ENCODE measurements at regions of chr7 and their contacts with region 1.

Region 1: GRCh38 chr7:95589031-95589430 is 7.3 kb downstream of the PDK4 start:
- H3K4me3 Mint-ChIP-seq: no peak overlapping the region
- H3K27ac Mint-ChIP-seq: no peak overlapping the region
- H3K4me1 Mint-ChIP-seq: peaks cover 9% of the 10 kb centered on the region
- H3K27me3 Mint-ChIP-seq: no peaks in the 10 kb centered on the region

Region 2: DNA sequence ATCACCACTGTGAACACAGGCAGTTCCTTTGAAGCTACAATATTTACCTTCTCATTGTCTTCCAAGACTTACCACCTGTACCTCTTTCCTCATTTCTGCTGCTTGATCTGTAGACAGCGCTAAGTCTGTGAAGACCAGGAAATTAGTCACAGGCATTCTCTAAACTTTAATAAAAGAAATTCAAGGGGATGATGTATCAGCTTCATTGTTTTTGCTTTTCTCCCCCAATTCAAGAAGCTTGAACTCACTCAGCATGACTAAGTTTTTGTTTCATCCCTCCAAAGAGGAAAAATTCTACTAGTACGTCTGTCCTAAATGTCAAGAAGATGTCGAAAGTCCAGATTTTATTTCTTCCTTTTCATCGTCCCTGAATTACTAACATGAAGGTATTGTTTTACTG is 757.0 kb before region 1 on chr7:
- intact Hi-C with region 1: no loop called
- H3K4me3 Mint-ChIP-seq: no peak overlapping the region
- H3K27ac Mint-ChIP-seq: no peak overlapping the region
- H3K4me1 Mint-ChIP-seq: no peaks in the 10 kb centered on the region
- H3K27me3 Mint-ChIP-seq: no peaks in the 10 kb centered on the region

Region 3: DNA sequence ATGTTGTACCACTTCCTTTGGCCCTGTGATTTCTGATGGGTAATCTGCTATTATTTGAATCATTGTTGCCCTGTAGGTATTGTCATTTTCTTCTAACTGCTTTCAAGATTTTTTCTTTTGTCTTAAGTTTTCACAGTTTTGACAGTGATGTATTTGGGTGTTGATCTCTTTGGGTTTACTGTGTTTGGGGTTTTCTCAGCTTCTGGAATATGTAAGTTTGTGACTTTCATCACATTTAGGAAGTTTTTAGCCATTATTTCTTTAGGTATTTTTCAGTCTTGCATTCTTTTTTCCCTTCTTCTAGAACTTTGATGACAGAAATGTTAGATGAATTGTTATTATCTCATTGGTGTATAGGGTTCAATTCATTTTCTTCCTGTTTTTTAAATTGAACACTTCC is 131.1 kb before region 1 on chr7:
- intact Hi-C with region 1: no loop called
- H3K4me3 Mint-ChIP-seq: no peak overlapping the region
- H3K27ac Mint-ChIP-seq: no peak overlapping the region
- H3K4me1 Mint-ChIP-seq: no peaks in the 10 kb centered on the region
- H3K27me3 Mint-ChIP-seq: no peaks in the 10 kb centered on the region

Region 4: GRCh38 chr7:95628831-95629439 is 39.9 kb after region 1 on chr7:
- intact Hi-C with region 1: loop called (anchors 5 kb)
- H3K4me3 Mint-ChIP-seq: no peak overlapping the region
- H3K27ac Mint-ChIP-seq: no peak overlapping the region
- H3K4me1 Mint-ChIP-seq: peaks cover 15% of the 10 kb centered on the region
- H3K27me3 Mint-ChIP-seq: no peaks in the 10 kb centered on the region

Region 5: DNA sequence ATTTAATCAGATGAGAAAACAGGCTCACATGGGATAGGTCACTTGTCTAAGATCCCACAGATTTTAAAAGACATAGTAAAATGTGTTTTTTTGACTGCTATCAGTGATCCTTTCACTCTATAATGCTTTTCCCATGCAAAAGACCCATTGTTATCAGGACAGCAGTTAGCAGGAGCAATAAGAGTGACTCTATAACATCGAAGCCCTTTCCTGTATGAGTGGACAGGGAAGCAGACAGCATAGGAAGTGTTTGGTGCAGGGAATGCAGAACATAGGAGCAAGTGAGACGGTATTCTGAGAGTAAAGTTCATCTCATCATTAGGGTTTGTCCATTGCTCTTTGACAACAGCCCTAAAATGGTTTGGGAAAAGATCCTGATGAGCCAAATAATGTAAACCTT is 664.4 kb after region 1 on chr7:
- intact Hi-C with region 1: no loop called
- H3K4me3 Mint-ChIP-seq: no peak overlapping the region
- H3K27ac Mint-ChIP-seq: no peak overlapping the region
- H3K4me1 Mint-ChIP-seq: peaks cover 16% of the 10 kb centered on the region
- H3K27me3 Mint-ChIP-seq: no peaks in the 10 kb centered on the region

Region 6: GRCh38 chr7:96637522-96637921 is 1048.5 kb after region 1 on chr7:
- intact Hi-C with region 1: no loop called
- H3K4me3 Mint-ChIP-seq: no peak overlapping the region
- H3K27ac Mint-ChIP-seq: no peak overlapping the region
- H3K4me1 Mint-ChIP-seq: no peaks in the 10 kb centered on the region
- H3K27me3 Mint-ChIP-seq: peaks cover under 1% of the 10 kb centered on the region

Measured in dendritic cell treated with granulocyte-macrophage colony-stimulating factor and Interleukin-4, amounts not matched to agents 40 ng/mL and 50 ng/mL, for 4 days (primary cell).